OCI-LY7 (cell line): ENCODE measurements at regions of chr7 and their contacts with region 1.

Region 1: GRCh38 chr7:7566651-7567611 is at the start of gene MIOS:
- DNase-seq: peak; percentile 83
- H3K4me3 ChIP-seq: peak within 1 kb of the TSS; percentile 79
- H3K27ac ChIP-seq: peak within 1 kb of the TSS; percentile 63
- H3K4me1 ChIP-seq: peaks cover 32% of the 10 kb centered on the region
- CTCF ChIP-seq: no peak
- total RNA-seq, gene MIOS: 18.9 and 24.9 TPM in 2 replicates

Region 2: GRCh38 chr7:7251742-7252141 is 315.2 kb before region 1 on chr7:
- CTCF ChIA-PET with region 1: no interaction called
- POLR2A ChIA-PET with region 1: interaction called, 4 read pairs
- intact Hi-C with region 1: loop called (anchors 2 kb)
- DNase-seq: peak; percentile 93
- H3K4me3 ChIP-seq: peak overlapping the region; percentile 39
- H3K27ac ChIP-seq: peak overlapping the region; percentile 76
- H3K4me1 ChIP-seq: peaks cover 71% of the 10 kb centered on the region
- CTCF ChIP-seq: no peak

Region 3: DNA sequence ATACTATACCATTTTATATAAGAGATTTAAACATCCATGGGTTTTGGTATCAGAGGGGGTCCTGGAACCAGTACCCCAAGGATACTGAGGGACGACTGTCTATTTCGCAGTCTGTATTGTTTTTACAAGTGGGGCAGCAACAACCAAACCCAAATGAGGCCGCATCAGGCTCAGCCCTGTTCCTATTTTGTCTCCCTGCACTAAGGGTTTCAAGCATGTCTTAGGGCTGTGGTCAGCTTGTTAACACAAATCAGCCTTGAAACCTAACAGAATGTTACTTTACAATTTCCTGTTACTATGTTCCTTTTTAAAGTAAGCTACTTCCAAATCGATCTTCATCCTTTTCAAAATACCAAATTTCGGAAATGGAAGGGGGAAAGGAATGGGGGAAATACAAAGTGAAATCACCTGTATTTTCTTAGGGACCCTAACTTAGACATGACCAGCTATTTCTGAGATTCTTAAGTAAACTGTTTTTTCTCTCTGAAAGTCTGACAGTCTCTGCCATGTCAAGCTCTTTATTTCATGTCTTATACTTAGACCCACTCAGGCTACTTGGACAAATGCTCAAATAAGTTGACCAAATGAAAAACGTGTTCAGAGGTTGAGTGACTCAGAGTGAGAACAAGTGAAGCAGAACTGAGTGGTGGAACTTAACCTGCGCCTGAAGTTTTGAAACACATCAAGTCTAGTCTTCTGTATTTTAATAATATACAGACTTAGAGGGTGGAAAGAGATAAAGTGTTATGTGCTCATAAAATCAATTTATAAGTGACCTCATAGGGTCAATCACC is 308.8 kb before region 1 on chr7:
- CTCF ChIA-PET with region 1: no interaction called
- POLR2A ChIA-PET with region 1: interaction called, 4 read pairs
- intact Hi-C with region 1: loop called (anchors 2 kb)
- DNase-seq: peak; percentile 60
- H3K4me3 ChIP-seq: peak overlapping the region; percentile 65
- H3K27ac ChIP-seq: peak overlapping the region; percentile 86
- H3K4me1 ChIP-seq: peaks cover 44% of the 10 kb centered on the region
- CTCF ChIP-seq: no peak

Region 4: GRCh38 chr7:7640221-7641128 is 73.5 kb after region 1 on chr7 and contains the start of gene UMAD1:
- CTCF ChIA-PET with region 1: no interaction called
- POLR2A ChIA-PET with region 1: interaction called, 17 read pairs
- intact Hi-C with region 1: loop called (anchors 1 kb)
- DNase-seq: peak; percentile 99
- H3K4me3 ChIP-seq: peak within 1 kb of the TSS; percentile 92
- H3K27ac ChIP-seq: peak within 1 kb of the TSS; percentile 72
- H3K4me1 ChIP-seq: peaks cover 28% of the 10 kb centered on the region
- CTCF ChIP-seq: no peak
- total RNA-seq, gene UMAD1: 8.7 and 14.2 TPM in 2 replicates

Region 5: GRCh38 chr7:7772397-7772821 is 205.5 kb after region 1 on chr7:
- CTCF ChIA-PET with region 1: no interaction called
- POLR2A ChIA-PET with region 1: no interaction called
- intact Hi-C with region 1: no loop called
- DNase-seq: peak; percentile 50
- H3K4me3 ChIP-seq: peak overlapping the region; percentile 56
- H3K27ac ChIP-seq: peak overlapping the region; percentile 35
- H3K4me1 ChIP-seq: peaks cover 29% of the 10 kb centered on the region
- CTCF ChIP-seq: no peak